Natural killer cell (primary cell): ENCODE measurements at regions of chr16 and their contacts with region 1.

Region 1: DNA sequence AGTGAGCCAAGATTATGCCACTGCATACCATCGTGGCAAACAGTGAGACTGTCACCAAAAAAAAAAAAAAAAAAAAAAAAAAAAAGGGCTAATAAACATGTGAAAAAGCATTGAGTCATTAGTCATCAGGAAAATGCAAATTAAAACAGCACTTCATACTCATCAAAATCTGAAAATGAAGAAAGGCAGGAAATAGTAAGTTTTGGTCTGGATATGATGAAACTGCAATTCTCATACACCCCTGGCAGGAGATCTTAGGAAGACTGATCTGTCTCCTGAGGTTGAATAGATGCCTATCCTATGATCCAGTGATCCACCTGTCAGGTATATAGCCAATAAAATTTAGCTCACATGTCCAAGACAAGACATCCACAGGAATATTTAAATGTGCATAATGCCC is 212.7 kb downstream of the CPPED1 start:
- DNase-seq: no peak
- ATAC-seq: no peak
- H3K4me3 ChIP-seq: no peak overlapping the region
- H3K4me3 Mint-ChIP-seq: no peak overlapping the region
- H3K27ac ChIP-seq: no peak overlapping the region
- H3K27ac Mint-ChIP-seq: no peak overlapping the region
- H3K4me1 ChIP-seq: no peaks in the 10 kb centered on the region
- H3K4me1 Mint-ChIP-seq: no peaks in the 10 kb centered on the region
- H3K27me3 ChIP-seq: no peaks in the 10 kb centered on the region
- H3K27me3 Mint-ChIP-seq: peaks cover 0 to 12% of the 10 kb centered on the region in 2 donors
- CTCF ChIP-seq: no peak

Region 2: DNA sequence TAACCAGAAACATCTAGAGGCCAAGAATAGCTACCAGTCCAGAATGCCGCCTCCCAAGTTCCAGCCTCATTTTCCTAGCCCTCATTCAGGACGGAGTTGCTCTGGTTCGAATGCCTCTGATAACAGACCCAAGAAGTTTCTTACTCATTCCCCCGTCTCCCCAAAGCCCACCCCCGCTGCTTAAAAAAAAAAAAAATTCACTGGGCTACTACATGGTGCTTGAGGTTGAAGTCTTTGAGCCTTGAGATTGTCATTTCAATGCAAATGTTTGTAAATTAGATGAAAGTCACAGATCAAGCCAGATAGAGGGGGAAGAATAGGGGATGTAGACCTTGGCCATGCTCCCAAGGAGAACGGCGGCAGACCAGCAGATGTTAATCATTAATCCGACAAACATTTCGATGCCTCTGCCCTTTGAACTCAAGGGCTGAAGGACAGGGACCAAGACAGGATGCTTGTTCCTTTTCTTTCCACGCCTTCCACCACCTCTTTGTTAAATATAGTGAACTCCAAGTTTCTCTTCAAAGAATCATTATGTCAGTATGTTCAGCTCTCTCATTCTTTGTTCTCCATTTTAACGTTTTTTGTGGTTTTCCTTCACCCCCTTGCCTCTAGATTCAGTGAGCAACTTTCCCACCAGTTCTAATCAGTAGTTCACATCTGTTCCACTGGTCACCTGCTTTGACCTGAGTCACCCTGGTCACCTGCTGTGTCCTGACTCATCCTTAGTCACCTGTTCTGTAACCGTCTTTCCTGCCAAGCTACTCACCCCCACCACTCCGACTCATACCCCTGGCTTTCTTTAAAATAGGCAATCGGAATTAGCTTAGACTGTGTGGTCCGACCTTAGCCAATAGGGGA is 22.4 kb after region 1 on chr16:
- intact Hi-C with region 1: loop called (anchors 1 kb)
- DNase-seq: no peak
- ATAC-seq: no peak
- H3K4me3 ChIP-seq: no peak overlapping the region
- H3K4me3 Mint-ChIP-seq: no peak overlapping the region
- H3K27ac ChIP-seq: no peak overlapping the region
- H3K27ac Mint-ChIP-seq: no peak overlapping the region
- H3K4me1 ChIP-seq: no peaks in the 10 kb centered on the region
- H3K4me1 Mint-ChIP-seq: no peaks in the 10 kb centered on the region
- H3K27me3 ChIP-seq: peaks cover 2% of the 10 kb centered on the region
- H3K27me3 Mint-ChIP-seq: peaks cover 19 to 27% of the 10 kb centered on the region in 2 donors
- CTCF ChIP-seq: no peak